ENCODE measurements at regions of chr2 and their contacts with region 1.

Region 1: GRCh38 chr2:112749755-112750559 is 14.5 kb downstream of the CKAP2L start:
- DNase-seq: peak; percentile 54 to 89
- H3K4me3 ChIP-seq: no peak overlapping the region
- H3K4me1 ChIP-seq: peaks cover 15% of the 10 kb centered on the region
- H3K27me3 ChIP-seq: no peaks in the 10 kb centered on the region

Region 2: GRCh38 chr2:112877423-112877822 is 127.5 kb after region 1 on chr2:
- in situ Hi-C with region 1: loop called (anchors 5 kb)
- DNase-seq: no peak
- H3K4me3 ChIP-seq: no peak overlapping the region
- H3K4me1 ChIP-seq: no peaks in the 10 kb centered on the region
- H3K27me3 ChIP-seq: peaks cover under 1% of the 10 kb centered on the region; the same call in 1 of the 2 replicates

Region 3: DNA sequence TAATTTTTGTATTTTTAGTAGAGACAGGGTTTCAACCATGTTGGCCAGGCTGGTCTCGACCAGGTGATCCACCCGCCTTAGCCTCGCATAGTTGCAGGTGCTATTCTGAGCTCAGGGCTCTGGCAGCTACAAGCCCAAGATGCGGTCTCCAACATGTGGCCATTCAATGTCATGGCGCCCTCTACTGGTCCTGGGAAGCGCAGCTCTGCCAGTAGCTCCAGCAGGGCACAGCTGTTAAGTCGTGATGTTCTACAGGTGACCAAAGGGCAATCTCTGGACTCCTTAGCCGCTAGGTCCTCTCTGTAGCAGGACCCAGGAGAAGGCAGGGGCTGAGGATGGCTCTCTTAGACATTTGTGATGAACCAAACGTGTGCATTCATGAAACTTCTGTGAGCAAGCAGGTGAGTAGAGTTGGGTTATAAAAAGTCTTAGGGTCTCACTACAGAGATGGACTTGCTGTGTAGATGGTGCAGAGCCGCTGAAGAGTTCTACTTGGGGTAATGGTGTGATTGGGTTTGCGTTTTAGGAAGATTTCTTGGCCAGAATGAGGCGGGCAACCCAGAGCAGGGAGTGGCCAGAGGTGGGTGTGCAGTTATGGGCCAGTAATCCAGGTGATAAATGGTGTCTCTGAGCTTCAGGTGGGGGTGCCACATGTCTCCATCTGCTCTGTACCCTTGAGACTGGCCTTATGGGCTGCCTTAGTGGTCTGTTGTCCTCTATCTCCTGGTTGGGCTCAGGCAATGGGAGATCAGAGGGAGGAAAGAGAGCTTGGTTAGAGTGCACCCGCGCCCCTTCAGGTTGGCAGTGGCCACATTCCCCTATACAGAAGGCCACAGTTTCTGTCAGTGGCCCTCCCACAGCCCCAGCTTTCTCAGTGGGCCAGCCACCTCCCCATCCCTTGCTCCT is 192.0 kb after region 1 on chr2:
- in situ Hi-C with region 1: loop called (anchors 10 kb)
- DNase-seq: peak; percentile 59 to 85
- H3K4me3 ChIP-seq: no peak overlapping the region
- H3K4me1 ChIP-seq: no peaks in the 10 kb centered on the region
- H3K27me3 ChIP-seq: peaks cover 3% of the 10 kb centered on the region

Region 4: DNA sequence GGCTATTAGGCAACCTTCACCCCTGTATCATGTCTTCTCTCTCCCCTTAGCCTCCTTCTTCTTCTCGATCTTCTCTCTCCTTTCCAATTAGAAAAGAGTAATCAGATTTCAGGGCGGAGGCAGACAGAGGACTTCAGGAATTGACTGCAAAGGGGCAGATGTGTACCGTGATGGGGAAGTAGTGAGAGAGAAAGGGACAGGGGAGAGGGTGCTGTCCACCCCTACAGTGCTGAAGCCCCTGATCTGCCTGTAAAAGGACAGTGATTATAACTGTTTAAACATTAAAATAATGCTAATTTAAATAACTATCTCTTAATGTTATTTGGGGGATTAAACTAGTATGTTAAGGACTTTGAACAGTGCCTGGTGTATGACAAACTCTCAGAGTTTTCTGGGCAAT is 1318.5 kb after region 1 on chr2:
- in situ Hi-C with region 1: no loop called
- DNase-seq: peak in 1 of 2 experiments; percentile 20
- H3K4me3 ChIP-seq: no peak overlapping the region
- H3K4me1 ChIP-seq: no peaks in the 10 kb centered on the region
- H3K27me3 ChIP-seq: no peaks in the 10 kb centered on the region

Measured in HAP-1 (cell line).